HCT116 (cell line): ENCODE measurements at regions of chr17 and their contacts with region 1.

Region 1: GRCh38 chr17:32755045-32755805 is 121.7 kb downstream of the MYO1D start:
- DNase-seq: peak; percentile 52
- ATAC-seq: peak; percentile 84
- H3K4me3 ChIP-seq: no peak overlapping the region
- H3K27ac ChIP-seq: no peak overlapping the region
- H3K4me1 ChIP-seq: no peaks in the 10 kb centered on the region
- H3K27me3 ChIP-seq: no peaks in the 10 kb centered on the region
- CTCF ChIP-seq: peak; percentile 42 to 66 (median 61); a peak in 5 of 6 replicates
- POLR2A ChIP-seq: no peak
- RAD21 ChIP-seq: peak; percentile 72

Region 2: GRCh38 chr17:32191306-32191705 is 563.9 kb before region 1 on chr17:
- CTCF ChIA-PET with region 1: no interaction called
- POLR2A ChIA-PET with region 1: no interaction called
- RAD21 ChIA-PET with region 1: no interaction called
- intact Hi-C with region 1: no loop called
- DNase-seq: no peak
- ATAC-seq: no peak
- H3K4me3 ChIP-seq: no peak overlapping the region
- H3K27ac ChIP-seq: no peak overlapping the region
- H3K4me1 ChIP-seq: peaks cover 0 to 13% of the 10 kb centered on the region in 2 experiments; a peak in 2 of 4 replicates
- H3K27me3 ChIP-seq: no peaks in the 10 kb centered on the region
- CTCF ChIP-seq: no peak
- POLR2A ChIP-seq: no peak
- RAD21 ChIP-seq: no peak

Region 3: DNA sequence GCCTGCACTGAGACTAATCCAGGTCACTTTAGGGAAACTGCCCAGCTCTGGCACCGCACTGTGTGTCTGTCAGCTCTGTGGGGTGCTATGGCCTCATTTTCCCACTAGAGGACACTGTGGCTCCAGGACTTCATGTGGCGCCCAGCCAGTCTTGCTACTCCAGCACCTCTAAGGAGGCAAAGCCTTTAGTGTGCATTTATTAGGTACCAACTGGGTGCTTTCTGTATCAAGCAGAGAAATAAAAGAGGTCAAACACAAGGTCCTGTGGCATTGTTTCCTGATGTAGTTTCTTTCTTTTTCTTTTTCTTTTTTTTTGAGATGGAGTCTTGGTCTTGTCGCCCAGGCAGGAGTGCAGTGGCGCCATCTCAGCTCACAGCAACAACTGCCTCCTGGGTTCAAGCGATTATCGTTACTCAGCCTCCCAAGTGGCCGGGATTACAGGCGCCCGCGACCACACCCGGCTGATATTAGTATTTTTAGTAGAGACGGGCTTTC is 502.1 kb before region 1 on chr17:
- CTCF ChIA-PET with region 1: no interaction called
- POLR2A ChIA-PET with region 1: no interaction called
- RAD21 ChIA-PET with region 1: no interaction called
- intact Hi-C with region 1: loop called (anchors 10 kb)
- DNase-seq: peak; percentile 54
- ATAC-seq: peak; percentile 98
- H3K4me3 ChIP-seq: no peak overlapping the region
- H3K27ac ChIP-seq: no peak overlapping the region
- H3K4me1 ChIP-seq: no peaks in the 10 kb centered on the region
- H3K27me3 ChIP-seq: no peaks in the 10 kb centered on the region
- CTCF ChIP-seq: peak; percentile 89 to 99 (median 98)
- POLR2A ChIP-seq: no peak
- RAD21 ChIP-seq: peak; percentile 94

Region 4: DNA sequence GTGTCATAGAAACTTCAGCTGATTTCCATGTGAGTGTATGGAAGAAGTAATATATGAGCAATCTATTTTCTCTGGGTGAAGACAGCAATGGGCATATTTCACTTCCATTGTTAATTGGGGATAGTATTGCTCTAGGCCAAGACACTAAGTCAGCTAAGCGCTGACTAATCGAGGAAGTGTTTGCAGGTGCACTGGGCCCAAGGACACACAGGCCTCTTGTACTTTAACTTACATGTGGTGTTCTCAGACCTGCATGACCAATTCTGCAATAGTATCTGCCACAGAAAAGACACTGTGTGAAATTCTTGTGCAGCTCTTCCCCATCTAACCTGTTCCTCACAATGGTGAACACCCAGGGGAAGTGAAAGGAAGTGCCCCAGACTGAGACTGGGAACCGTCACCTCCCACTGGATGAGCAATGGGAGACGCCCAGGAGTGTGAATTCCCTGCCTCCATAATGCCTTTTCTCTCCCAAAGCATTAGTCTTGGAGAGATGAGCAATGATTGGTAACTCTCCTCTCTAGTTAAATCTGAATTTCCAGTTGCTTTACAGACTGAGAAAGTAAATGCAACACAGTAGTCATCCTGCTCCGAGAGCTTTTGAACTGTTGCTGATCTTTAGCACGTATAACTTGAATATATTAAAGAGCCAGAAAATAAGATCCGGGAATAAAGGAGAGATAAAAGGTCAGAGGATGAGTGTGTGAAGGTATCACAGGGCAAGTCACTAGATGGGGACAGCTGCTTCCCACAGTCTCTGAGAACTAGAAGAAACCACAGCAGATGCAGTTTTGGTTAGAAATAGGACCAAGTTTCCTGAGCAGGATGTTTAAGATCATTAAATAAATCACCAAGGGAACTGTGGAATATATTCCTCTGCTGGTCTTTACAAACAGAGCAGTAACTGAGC is 185.8 kb before region 1 on chr17:
- CTCF ChIA-PET with region 1: no interaction called
- POLR2A ChIA-PET with region 1: no interaction called
- RAD21 ChIA-PET with region 1: no interaction called
- intact Hi-C with region 1: no loop called
- DNase-seq: no peak
- ATAC-seq: no peak
- H3K4me3 ChIP-seq: no peak overlapping the region
- H3K27ac ChIP-seq: no peak overlapping the region
- H3K4me1 ChIP-seq: peaks cover 0 to 10% of the 10 kb centered on the region in 2 experiments; a peak in 1 of 4 replicates
- H3K27me3 ChIP-seq: no peaks in the 10 kb centered on the region
- CTCF ChIP-seq: no peak
- POLR2A ChIP-seq: no peak
- RAD21 ChIP-seq: no peak

Region 5: DNA sequence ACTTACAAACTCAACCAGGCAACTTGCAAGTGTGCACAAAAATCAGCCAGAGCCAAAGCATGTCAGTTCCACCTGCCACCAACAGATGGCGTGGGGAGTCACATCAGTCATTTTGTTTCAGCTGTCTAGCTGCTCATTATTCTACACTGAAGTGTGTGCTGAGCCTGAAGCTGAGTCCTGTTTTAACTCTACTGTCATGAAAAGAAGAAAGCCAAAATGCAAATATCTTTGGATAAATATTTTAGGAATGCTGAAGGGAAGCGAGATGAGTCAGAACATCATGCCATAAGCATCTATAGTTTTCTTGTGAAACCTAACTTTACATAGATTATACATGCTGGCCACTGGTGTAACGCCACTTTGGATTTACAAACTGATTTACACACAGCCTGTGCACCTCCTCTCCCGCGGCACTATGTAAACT is 95.8 kb before region 1 on chr17:
- CTCF ChIA-PET with region 1: interaction called, 15 read pairs
- POLR2A ChIA-PET with region 1: no interaction called
- RAD21 ChIA-PET with region 1: interaction called in 1 of 2 experiments, 3 read pairs
- intact Hi-C with region 1: loop called (anchors 1 kb)
- DNase-seq: peak; percentile 35
- ATAC-seq: peak; percentile 84
- H3K4me3 ChIP-seq: no peak overlapping the region
- H3K27ac ChIP-seq: no peak overlapping the region
- H3K4me1 ChIP-seq: no peaks in the 10 kb centered on the region
- H3K27me3 ChIP-seq: no peaks in the 10 kb centered on the region
- CTCF ChIP-seq: peak; percentile 23 to 95 (median 89); a peak in 5 of 6 replicates
- POLR2A ChIP-seq: no peak
- RAD21 ChIP-seq: peak; percentile 45

Region 6: GRCh38 chr17:32671896-32672295 is 83.3 kb before region 1 on chr17:
- CTCF ChIA-PET with region 1: no interaction called
- POLR2A ChIA-PET with region 1: no interaction called
- RAD21 ChIA-PET with region 1: no interaction called
- intact Hi-C with region 1: loop called (anchors 1 kb)
- DNase-seq: no peak
- ATAC-seq: no peak
- H3K4me3 ChIP-seq: no peak overlapping the region
- H3K27ac ChIP-seq: no peak overlapping the region
- H3K4me1 ChIP-seq: no peaks in the 10 kb centered on the region
- H3K27me3 ChIP-seq: no peaks in the 10 kb centered on the region
- CTCF ChIP-seq: no peak
- POLR2A ChIP-seq: no peak
- RAD21 ChIP-seq: no peak